ENCODE measurements at regions of chr7 and their contacts with region 1.

Region 1: DNA sequence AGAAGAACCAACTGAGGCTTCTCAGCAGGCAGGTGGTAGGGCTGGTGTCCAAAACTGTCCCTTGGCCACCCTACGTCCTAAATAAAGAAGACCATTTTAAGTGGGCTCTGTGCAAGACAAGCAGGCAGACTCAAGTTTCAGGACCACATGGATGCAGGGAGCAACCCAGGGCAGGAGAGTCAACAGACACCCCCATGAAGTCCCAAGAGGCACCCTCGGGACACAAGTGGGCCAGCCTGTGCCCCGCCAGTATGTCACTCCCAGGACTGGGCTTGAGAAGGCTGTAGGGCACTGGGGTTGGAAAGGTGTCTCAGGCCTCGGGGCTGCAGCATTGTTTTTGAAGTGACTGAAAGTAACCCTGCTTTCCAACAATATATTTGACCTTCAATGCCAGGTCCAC is 157.4 kb downstream of the TNS3 start:
- DNase-seq: no peak

Region 2: GRCh38 chr7:47411901-47412300 is 12.6 kb before region 1 on chr7:
- intact Hi-C with region 1: loop called (anchors 1 kb)
- DNase-seq: peak in 1 of 10 donors; percentile 18